B cell (primary cell): ENCODE measurements at regions of chr10 and their contacts with region 1.

Region 1: GRCh38 chr10:4839401-4839800 is 13.4 kb downstream of the AKR1E2 start:
- DNase-seq: no peak
- ATAC-seq: no peak
- H3K4me3 ChIP-seq: no peak overlapping the region
- H3K4me3 Mint-ChIP-seq: no peak overlapping the region
- H3K27ac ChIP-seq: no peak overlapping the region
- H3K27ac Mint-ChIP-seq: no peak overlapping the region
- H3K4me1 ChIP-seq: no peaks in the 10 kb centered on the region
- H3K4me1 Mint-ChIP-seq: peaks cover 2% of the 10 kb centered on the region
- H3K27me3 ChIP-seq: no peaks in the 10 kb centered on the region
- H3K27me3 Mint-ChIP-seq: no peaks in the 10 kb centered on the region
- CTCF ChIP-seq: no peak

Region 2: DNA sequence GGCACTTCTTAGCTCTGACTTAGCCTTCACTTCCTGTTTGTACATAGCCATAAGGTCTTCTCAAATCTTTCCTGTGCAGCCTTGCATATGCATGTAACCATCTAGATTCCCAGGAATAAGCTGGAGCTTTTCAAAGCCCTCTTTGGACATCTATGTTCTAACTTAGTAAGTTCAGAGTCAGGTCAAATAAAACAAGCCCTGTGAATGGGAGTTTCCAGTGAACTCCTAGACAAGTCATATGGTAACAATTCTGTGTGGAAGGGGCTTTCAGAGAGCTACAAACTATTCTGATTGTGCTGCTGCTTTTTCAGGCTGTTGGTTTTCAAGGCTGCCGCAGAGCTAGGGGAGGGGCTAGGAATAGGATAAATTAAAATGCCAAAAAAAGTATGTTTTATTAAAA is 221.8 kb before region 1 on chr10:
- CTCF ChIA-PET with region 1: no interaction called
- POLR2A ChIA-PET with region 1: no interaction called
- intact Hi-C with region 1: no loop called
- DNase-seq: no peak
- ATAC-seq: no peak
- H3K4me3 ChIP-seq: no peak overlapping the region
- H3K4me3 Mint-ChIP-seq: no peak overlapping the region
- H3K27ac ChIP-seq: no peak overlapping the region
- H3K27ac Mint-ChIP-seq: no peak overlapping the region
- H3K4me1 ChIP-seq: no peaks in the 10 kb centered on the region
- H3K4me1 Mint-ChIP-seq: no peaks in the 10 kb centered on the region
- H3K27me3 ChIP-seq: no peaks in the 10 kb centered on the region
- H3K27me3 Mint-ChIP-seq: peaks cover 6% of the 10 kb centered on the region
- CTCF ChIP-seq: no peak

Region 3: DNA sequence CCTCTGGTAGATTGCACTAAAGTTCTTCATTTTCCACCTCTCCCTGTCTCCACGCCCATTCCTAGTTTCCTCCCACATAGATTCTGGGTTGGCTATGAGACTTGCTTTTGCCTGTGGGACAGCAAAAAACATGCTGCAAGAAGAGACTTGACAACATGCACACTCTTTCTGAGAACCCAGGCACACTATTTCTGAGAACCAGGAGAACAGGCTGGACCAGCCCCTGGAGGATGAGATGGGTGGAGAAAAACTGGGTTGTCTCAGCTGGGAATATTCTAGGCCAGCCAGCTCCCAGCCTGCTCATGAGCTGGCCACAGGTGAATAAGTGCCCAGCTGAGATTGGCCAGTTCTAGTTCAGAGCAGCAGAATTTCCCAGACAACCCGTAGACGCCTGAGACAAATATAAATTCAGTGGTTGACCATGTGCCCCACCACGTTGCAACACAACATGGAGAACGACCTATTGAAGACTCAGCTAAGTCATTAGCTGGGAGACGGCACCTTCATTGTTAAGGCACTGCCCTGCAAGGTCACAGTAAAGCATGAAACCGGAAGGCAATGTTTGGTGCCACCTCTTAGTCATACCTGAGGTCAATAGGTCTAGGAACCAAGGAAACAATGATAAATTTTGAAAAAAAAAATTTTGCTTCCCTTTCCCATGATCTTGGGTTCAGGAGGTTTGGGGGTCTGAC is 106.1 kb before region 1 on chr10:
- CTCF ChIA-PET with region 1: no interaction called
- POLR2A ChIA-PET with region 1: no interaction called
- intact Hi-C with region 1: no loop called
- DNase-seq: no peak
- ATAC-seq: no peak
- H3K4me3 ChIP-seq: no peak overlapping the region
- H3K4me3 Mint-ChIP-seq: no peak overlapping the region
- H3K27ac ChIP-seq: no peak overlapping the region
- H3K27ac Mint-ChIP-seq: no peak overlapping the region
- H3K4me1 ChIP-seq: no peaks in the 10 kb centered on the region
- H3K4me1 Mint-ChIP-seq: no peaks in the 10 kb centered on the region
- H3K27me3 ChIP-seq: no peaks in the 10 kb centered on the region
- H3K27me3 Mint-ChIP-seq: peaks cover 4% of the 10 kb centered on the region
- CTCF ChIP-seq: no peak

Region 4: GRCh38 chr10:4807761-4808507 is 31.5 kb before region 1 on chr10:
- CTCF ChIA-PET with region 1: no interaction called
- POLR2A ChIA-PET with region 1: no interaction called
- intact Hi-C with region 1: no loop called
- DNase-seq: no peak
- ATAC-seq: no peak
- H3K4me3 ChIP-seq: no peak overlapping the region
- H3K4me3 Mint-ChIP-seq: no peak overlapping the region
- H3K27ac ChIP-seq: no peak overlapping the region
- H3K27ac Mint-ChIP-seq: no peak overlapping the region
- H3K4me1 ChIP-seq: peaks cover 0 to 3% of the 10 kb centered on the region in 2 donors
- H3K4me1 Mint-ChIP-seq: peaks cover 3% of the 10 kb centered on the region
- H3K27me3 ChIP-seq: no peaks in the 10 kb centered on the region
- H3K27me3 Mint-ChIP-seq: peaks cover 28% of the 10 kb centered on the region
- CTCF ChIP-seq: no peak

Region 5: DNA sequence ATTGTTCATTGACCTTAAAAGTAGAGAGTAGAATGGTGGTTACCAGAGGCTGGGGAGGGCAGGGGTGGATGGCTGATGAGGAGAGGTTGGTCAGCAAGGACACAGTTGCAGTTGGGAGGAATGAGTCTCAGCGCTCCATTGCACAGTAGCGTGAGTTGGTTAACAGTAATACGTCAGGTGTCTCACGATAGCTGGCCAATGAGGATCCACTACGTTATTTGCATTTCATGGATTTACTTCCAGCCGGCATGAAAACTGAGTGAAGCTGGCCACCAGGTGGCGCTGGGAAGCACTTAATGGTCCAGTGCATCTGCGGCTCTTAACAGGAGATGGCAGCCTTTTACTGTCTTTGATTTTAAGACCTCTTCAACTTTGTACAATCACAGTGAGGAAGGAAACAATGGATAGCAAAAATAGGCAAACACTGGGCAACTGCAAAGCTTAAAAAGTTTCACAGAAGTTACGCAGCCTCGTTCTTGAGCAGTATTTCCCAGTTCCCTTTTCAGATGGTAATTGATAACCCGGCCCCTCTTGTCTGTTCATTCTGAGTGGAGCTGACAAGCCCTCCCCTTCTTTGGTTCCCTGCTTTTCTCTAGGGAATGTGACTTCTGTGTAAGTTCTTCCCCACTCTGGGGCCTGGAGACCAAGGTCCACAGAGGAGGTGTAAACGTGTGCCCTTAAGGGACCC is 10.3 kb after region 1 on chr10:
- CTCF ChIA-PET with region 1: interaction called, 26 read pairs
- POLR2A ChIA-PET with region 1: no interaction called
- intact Hi-C with region 1: no loop called
- DNase-seq: peak; percentile 79
- ATAC-seq: peak; percentile 76
- H3K4me3 ChIP-seq: no peak overlapping the region
- H3K4me3 Mint-ChIP-seq: peak overlapping the region; percentile 63
- H3K27ac ChIP-seq: no peak overlapping the region
- H3K27ac Mint-ChIP-seq: no peak overlapping the region
- H3K4me1 ChIP-seq: peaks cover 8 to 10% of the 10 kb centered on the region in 2 donors
- H3K4me1 Mint-ChIP-seq: peaks cover 12% of the 10 kb centered on the region
- H3K27me3 ChIP-seq: no peaks in the 10 kb centered on the region
- H3K27me3 Mint-ChIP-seq: peaks cover 6% of the 10 kb centered on the region
- CTCF ChIP-seq: peak; percentile 85